Heart right ventricle (tissue), 16 donors: ENCODE measurements at regions of chr6 and their contacts with region 1.

Region 1: DNA sequence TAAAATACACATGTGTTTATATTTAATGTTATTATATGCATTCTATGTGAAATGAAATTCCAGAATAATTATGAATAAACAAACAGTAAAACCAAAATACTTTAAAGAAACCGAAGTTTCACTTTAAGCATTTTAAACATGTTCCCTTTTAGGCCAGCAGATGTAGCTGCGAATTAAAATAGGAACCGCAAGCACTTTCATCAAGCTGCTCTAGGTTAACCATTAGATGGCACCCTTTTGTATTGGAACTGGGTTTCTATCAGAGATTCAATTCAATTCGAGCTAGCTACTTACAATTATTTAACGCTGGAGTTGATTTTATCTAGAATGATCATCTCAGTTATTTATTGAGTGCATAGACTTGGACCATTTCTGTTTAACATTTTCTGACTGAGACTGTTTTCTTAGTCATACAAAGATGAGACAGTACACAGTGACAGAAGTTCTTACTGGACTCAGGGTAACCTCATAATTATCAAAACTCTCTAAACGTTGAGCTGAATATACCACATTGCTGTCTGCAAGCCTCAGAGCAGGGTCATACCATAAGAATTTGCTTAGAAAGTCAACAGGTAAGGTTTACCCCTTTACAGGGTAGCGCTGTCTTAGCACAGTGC is 8.5 kb downstream of the TMEM242 start:
- DNase-seq: no peak
- ATAC-seq: peak in 7 of 8 donors; percentile 56 to 85 (median 69)
- H3K4me3 ChIP-seq: no peak overlapping the region
- H3K27ac ChIP-seq: peak overlapping the region in 3 of 10 donors; percentile 13 to 46 (median 26)
- H3K4me1 ChIP-seq: peaks cover 0 to 37% (median 24%) of the 10 kb centered on the region in 9 donors
- H3K27me3 ChIP-seq: no peaks in the 10 kb centered on the region
- CTCF ChIP-seq: peak; percentile 56 to 97 (median 85)

Region 2: GRCh38 chr6:156577749-156578148 is 737.1 kb before region 1 on chr6:
- intact Hi-C with region 1: no loop called
- DNase-seq: no peak
- ATAC-seq: no peak
- H3K4me3 ChIP-seq: no peak overlapping the region
- H3K27ac ChIP-seq: no peak overlapping the region
- H3K4me1 ChIP-seq: no peaks in the 10 kb centered on the region
- H3K27me3 ChIP-seq: no peaks in the 10 kb centered on the region
- CTCF ChIP-seq: no peak

Region 3: DNA sequence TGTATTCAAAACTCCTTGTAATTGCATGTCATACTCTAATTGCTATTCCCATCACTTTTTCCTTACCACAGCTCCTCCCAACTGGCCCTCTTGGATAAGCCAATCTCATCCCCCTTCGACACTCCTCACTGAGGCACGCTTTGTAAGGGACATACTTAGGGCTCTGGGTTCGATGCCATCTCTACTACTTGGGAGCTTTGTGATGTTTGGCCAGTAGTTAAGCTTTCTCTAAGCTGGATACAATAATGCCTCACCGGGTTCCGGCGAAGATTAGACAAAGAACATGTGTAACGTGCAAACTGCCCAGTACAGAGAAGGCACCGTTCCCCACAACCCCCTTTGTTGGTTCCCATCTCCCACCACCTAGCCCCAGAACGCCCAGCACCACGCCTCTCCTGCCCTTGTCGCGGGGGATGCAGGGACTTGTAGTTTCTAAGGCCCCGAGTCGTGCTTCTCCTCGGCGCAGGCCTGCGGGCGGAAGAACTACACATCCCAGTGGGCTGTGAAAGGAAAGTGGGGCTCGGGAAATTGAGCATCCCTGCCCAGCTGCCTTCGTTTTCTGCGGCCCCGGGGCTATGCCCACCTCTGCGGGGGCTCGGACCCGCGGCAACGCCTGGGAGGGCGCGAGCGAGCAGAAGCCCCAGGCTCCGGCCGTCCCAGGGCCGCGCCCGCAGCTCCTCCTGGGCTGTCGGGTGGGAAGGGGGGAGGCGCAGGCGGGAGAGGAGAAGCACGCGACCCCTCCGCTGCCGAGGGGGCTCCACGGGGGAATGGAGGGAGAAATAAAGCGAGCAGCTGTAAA is 65.0 kb after region 1 on chr6:
- intact Hi-C with region 1: loop called in 5 of 10 experiments (anchors 2 to 5 kb)
- DNase-seq: peak; percentile 87 to 94
- ATAC-seq: peak; percentile 90 to 95 (median 94)
- H3K4me3 ChIP-seq: peak overlapping the region; percentile 74 to 99 (median 95)
- H3K27ac ChIP-seq: peak overlapping the region; percentile 76 to 98 (median 96)
- H3K4me1 ChIP-seq: peaks cover 0 to 31% (median 22%) of the 10 kb centered on the region in 9 donors
- H3K27me3 ChIP-seq: no peaks in the 10 kb centered on the region
- CTCF ChIP-seq: no peak

Region 4: GRCh38 chr6:157571269-157571668 is 256.5 kb after region 1 on chr6:
- intact Hi-C with region 1: loop called in 1 of 10 experiments (anchors 10 kb)
- DNase-seq: no peak
- ATAC-seq: no peak
- H3K4me3 ChIP-seq: no peak overlapping the region
- H3K27ac ChIP-seq: no peak overlapping the region
- H3K4me1 ChIP-seq: peaks cover 0 to 18% (median 0%) of the 10 kb centered on the region in 9 donors
- H3K27me3 ChIP-seq: no peaks in the 10 kb centered on the region
- CTCF ChIP-seq: no peak

Region 5: GRCh38 chr6:157603314-157603940 is 288.6 kb after region 1 on chr6:
- intact Hi-C with region 1: loop called in 8 of 10 experiments (anchors 5 to 10 kb)
- DNase-seq: no peak
- ATAC-seq: peak in 2 of 8 donors; percentile 31 to 39
- H3K4me3 ChIP-seq: no peak overlapping the region
- H3K27ac ChIP-seq: no peak overlapping the region
- H3K4me1 ChIP-seq: peaks cover 0 to 1% (median 0%) of the 10 kb centered on the region in 9 donors
- H3K27me3 ChIP-seq: no peaks in the 10 kb centered on the region
- CTCF ChIP-seq: no peak

Region 6: GRCh38 chr6:157756708-157757429 is 442.1 kb after region 1 on chr6:
- intact Hi-C with region 1: loop called in 1 of 10 experiments (anchors 10 kb)
- DNase-seq: peak; percentile 83 to 90
- ATAC-seq: peak; percentile 85 to 94 (median 90)
- H3K4me3 ChIP-seq: peak overlapping the region in 1 of 10 donors; percentile 2
- H3K27ac ChIP-seq: peak overlapping the region in 3 of 10 donors; percentile 17 to 54 (median 32)
- H3K4me1 ChIP-seq: peaks cover 0 to 46% (median 21%) of the 10 kb centered on the region in 9 donors
- H3K27me3 ChIP-seq: no peaks in the 10 kb centered on the region
- CTCF ChIP-seq: peak; percentile 66 to 90 (median 83)